ENCODE measurements at regions of chr19 and their contacts with region 1.

Region 1: GRCh38 chr19:18251587-18252369 is 22.5 kb downstream of the IQCN start:
- DNase-seq: peak; percentile 88
- H3K4me3 Mint-ChIP-seq: no peak overlapping the region
- H3K27ac Mint-ChIP-seq: no peak overlapping the region
- H3K4me1 Mint-ChIP-seq: peaks cover 5% of the 10 kb centered on the region
- H3K27me3 Mint-ChIP-seq: peaks cover 61% of the 10 kb centered on the region

Region 2: DNA sequence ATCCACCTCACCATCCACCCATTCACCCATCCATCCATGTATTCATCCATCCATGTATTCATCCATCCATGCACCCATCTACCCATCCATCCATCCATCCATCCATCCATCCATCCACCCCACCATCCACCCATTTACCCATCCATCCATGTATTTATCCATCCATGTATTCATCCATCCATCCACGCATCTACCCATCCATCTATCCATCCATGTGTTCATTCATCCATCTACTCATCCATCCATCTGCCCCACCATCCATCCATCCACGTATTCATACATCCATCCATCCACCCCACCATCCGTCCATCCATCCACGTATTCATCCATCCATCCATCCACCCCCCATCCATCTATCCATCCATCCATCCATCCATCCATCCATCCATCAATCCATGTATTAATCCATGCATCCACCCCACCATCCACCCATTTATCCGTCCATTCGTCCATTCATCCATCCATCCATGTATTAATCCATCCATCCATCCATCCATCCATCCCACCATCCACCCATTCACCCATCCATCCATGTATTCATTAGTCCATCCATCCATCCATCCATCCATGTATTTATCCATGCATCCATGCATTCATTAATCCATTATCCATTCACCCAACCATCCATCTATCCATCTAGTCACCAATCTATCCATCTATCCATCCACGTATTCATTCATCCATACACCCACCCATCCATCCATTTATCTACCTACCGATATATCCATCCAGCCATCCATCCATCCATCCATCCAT is 167.7 kb before region 1 on chr19:
- CTCF ChIA-PET with region 1: no interaction called
- DNase-seq: no peak
- H3K4me3 Mint-ChIP-seq: peak overlapping the region; percentile 70
- H3K27ac Mint-ChIP-seq: no peak overlapping the region
- H3K4me1 Mint-ChIP-seq: peaks cover 55% of the 10 kb centered on the region
- H3K27me3 Mint-ChIP-seq: no peaks in the 10 kb centered on the region

Region 3: GRCh38 chr19:18112989-18113478 is 138.7 kb before region 1 on chr19:
- CTCF ChIA-PET with region 1: interaction called, 10 read pairs
- DNase-seq: peak; percentile 87
- H3K4me3 Mint-ChIP-seq: no peak overlapping the region
- H3K27ac Mint-ChIP-seq: no peak overlapping the region
- H3K4me1 Mint-ChIP-seq: peaks cover 33% of the 10 kb centered on the region
- H3K27me3 Mint-ChIP-seq: peaks cover 12% of the 10 kb centered on the region

Region 4: DNA sequence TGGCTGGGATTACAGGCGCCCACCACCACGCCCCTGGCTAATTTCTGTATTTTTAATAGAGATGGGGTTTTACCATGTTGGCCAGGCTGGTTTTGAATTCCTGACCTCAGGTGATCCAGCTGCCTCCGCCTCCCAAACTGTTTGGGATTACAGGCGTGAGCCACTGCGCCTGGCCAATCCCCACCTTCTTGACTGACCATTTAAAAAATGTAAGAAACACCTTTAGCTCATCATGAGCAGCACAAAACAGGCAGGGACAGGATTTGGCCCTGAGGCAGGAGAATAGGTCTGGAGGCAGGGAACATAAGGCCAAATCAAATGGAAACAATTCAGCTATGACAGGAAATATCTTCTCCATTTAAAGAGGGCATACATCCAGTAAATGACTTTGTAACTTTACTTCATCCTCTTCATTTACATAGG is 60.1 kb before region 1 on chr19:
- CTCF ChIA-PET with region 1: interaction called, 10 read pairs
- DNase-seq: no peak
- H3K4me3 Mint-ChIP-seq: peak overlapping the region; percentile 79
- H3K27ac Mint-ChIP-seq: peak overlapping the region; percentile 95
- H3K4me1 Mint-ChIP-seq: peaks cover 28% of the 10 kb centered on the region
- H3K27me3 Mint-ChIP-seq: no peaks in the 10 kb centered on the region

Region 5: GRCh38 chr19:18203863-18204393 is 47.9 kb before region 1 on chr19 and contains the start of gene RAB3A:
- CTCF ChIA-PET with region 1: interaction called, 134 read pairs
- DNase-seq: peak; percentile 100
- H3K4me3 Mint-ChIP-seq: peak within 1 kb of the TSS; percentile 96
- H3K27ac Mint-ChIP-seq: peak within 1 kb of the TSS; percentile 94
- H3K4me1 Mint-ChIP-seq: peaks cover 23% of the 10 kb centered on the region
- H3K27me3 Mint-ChIP-seq: peaks cover 29% of the 10 kb centered on the region

Region 6: GRCh38 chr19:18239303-18239702 is 12.5 kb before region 1 on chr19:
- CTCF ChIA-PET with region 1: interaction called, 10 read pairs
- DNase-seq: peak; percentile 49
- H3K4me3 Mint-ChIP-seq: no peak overlapping the region
- H3K27ac Mint-ChIP-seq: no peak overlapping the region
- H3K4me1 Mint-ChIP-seq: no peaks in the 10 kb centered on the region
- H3K27me3 Mint-ChIP-seq: peaks cover 38% of the 10 kb centered on the region

Region 7: GRCh38 chr19:18328340-18329034 is 76.7 kb after region 1 on chr19:
- CTCF ChIA-PET with region 1: interaction called, 19 read pairs
- DNase-seq: peak; percentile 95
- H3K4me3 Mint-ChIP-seq: peak overlapping the region; percentile 42
- H3K27ac Mint-ChIP-seq: no peak overlapping the region
- H3K4me1 Mint-ChIP-seq: peaks cover 25% of the 10 kb centered on the region
- H3K27me3 Mint-ChIP-seq: peaks cover 27% of the 10 kb centered on the region